ENCODE measurements at regions of chr2 and their contacts with region 1.

Region 1: GRCh38 chr2:169824373-169825333 is at the start of gene METTL5:
- DNase-seq: peak; percentile 72 to 79 (median 73)
- H3K4me3 ChIP-seq: peak within 1 kb of the TSS; percentile 78
- H3K4me3 Mint-ChIP-seq: peak within 1 kb of the TSS; percentile 88 to 98 (median 95)
- H3K27ac ChIP-seq: peak within 1 kb of the TSS; percentile 79
- H3K27ac Mint-ChIP-seq: peak within 1 kb of the TSS; percentile 71 to 95 (median 90)
- H3K4me1 ChIP-seq: peaks cover 39% of the 10 kb centered on the region
- H3K4me1 Mint-ChIP-seq: peaks cover 49 to 80% (median 74%) of the 10 kb centered on the region in 3 donors
- H3K27me3 ChIP-seq: no peaks in the 10 kb centered on the region
- H3K27me3 Mint-ChIP-seq: no peaks in the 10 kb centered on the region
- total RNA-seq, gene METTL5: 93.0 to 100 TPM

Region 2: GRCh38 chr2:169637620-169638019 is 187.0 kb before region 1 on chr2:
- CTCF ChIA-PET with region 1: no interaction called
- POLR2A ChIA-PET with region 1: no interaction called
- DNase-seq: no peak
- H3K4me3 ChIP-seq: no peak overlapping the region
- H3K4me3 Mint-ChIP-seq: no peak overlapping the region
- H3K27ac ChIP-seq: no peak overlapping the region
- H3K27ac Mint-ChIP-seq: no peak overlapping the region
- H3K4me1 ChIP-seq: no peaks in the 10 kb centered on the region
- H3K4me1 Mint-ChIP-seq: no peaks in the 10 kb centered on the region
- H3K27me3 ChIP-seq: no peaks in the 10 kb centered on the region
- H3K27me3 Mint-ChIP-seq: no peaks in the 10 kb centered on the region

Region 3: DNA sequence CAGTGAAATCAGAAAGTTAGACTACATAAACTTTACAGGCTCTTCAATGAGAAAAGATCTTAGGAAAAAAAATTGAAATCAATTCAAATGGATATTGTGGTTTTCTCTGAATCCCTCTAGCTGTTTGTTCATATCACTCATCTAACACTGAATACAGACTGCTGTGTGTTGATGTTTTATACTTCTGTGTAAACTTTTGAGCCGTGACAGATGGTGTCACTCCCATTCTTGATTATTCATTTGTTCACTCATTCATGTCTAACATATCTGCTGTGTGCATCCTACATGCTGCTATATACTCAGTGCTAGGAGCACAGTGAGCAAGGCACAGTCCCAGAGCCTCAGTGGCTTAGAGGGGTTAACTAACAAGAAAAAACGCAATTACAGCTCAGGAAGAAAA is 78.4 kb before region 1 on chr2:
- CTCF ChIA-PET with region 1: no interaction called
- POLR2A ChIA-PET with region 1: no interaction called
- DNase-seq: no peak
- H3K4me3 ChIP-seq: no peak overlapping the region
- H3K4me3 Mint-ChIP-seq: no peak overlapping the region
- H3K27ac ChIP-seq: no peak overlapping the region
- H3K27ac Mint-ChIP-seq: no peak overlapping the region
- H3K4me1 ChIP-seq: no peaks in the 10 kb centered on the region
- H3K4me1 Mint-ChIP-seq: no peaks in the 10 kb centered on the region
- H3K27me3 ChIP-seq: no peaks in the 10 kb centered on the region
- H3K27me3 Mint-ChIP-seq: no peaks in the 10 kb centered on the region

Region 4: DNA sequence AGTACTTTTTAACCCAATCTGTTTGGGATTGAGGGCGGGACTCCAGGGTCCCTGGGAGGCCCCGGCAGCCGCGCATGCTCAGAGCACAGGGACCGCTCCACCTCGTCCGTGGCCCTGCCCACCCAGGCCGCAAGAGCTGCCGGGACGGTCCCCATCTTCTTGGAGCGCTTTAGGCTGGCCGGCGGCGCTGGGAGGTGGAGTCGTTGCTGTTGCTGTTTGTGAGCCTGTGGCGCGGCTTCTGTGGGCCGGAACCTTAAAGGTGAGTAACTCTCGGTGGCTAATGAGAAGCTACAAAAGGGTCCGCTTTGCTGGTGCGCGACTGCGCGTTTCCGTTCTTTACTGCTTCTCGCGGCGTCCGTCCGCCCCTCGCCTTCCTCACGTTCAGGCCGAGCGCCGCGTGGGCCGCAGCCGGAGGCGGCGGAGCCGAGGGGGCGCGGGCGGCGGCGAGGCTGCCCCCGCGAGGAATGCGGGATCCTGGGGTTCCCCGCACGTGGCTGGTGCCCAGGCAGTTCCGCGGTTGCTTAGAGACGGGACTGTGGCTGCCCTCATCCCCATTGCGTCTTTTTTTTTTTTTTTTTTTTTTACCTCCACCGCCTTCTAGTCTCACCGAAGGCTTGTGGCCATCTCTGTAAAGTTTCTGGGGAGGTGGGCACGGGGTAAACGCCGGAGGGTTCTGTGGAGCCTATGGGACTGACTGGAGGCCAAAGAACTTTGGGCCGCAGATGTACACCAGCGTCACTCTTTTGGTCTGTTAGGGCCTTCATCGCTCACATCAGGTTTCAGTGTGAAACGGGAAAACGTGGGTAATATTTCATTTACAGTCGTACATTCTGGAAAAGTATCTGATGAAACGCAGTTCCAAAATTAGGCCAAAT is 25.7 kb before region 1 on chr2 and contains the start of gene SSB:
- CTCF ChIA-PET with region 1: interaction called, 14 read pairs
- POLR2A ChIA-PET with region 1: interaction called, 15 read pairs
- DNase-seq: peak; percentile 86 to 96 (median 89)
- H3K4me3 ChIP-seq: peak within 1 kb of the TSS; percentile 81
- H3K4me3 Mint-ChIP-seq: peak within 1 kb of the TSS; percentile 84 to 98 (median 91)
- H3K27ac ChIP-seq: peak within 1 kb of the TSS; percentile 96
- H3K27ac Mint-ChIP-seq: peak within 1 kb of the TSS; percentile 89 to 99 (median 98)
- H3K4me1 ChIP-seq: peaks cover 27% of the 10 kb centered on the region
- H3K4me1 Mint-ChIP-seq: peaks cover 34 to 52% (median 46%) of the 10 kb centered on the region in 3 donors
- H3K27me3 ChIP-seq: no peaks in the 10 kb centered on the region
- H3K27me3 Mint-ChIP-seq: no peaks in the 10 kb centered on the region
- total RNA-seq, gene SSB: 101 to 113 TPM

Region 5: GRCh38 chr2:169839954-169840746 is 15.5 kb after region 1 on chr2:
- CTCF ChIA-PET with region 1: no interaction called
- POLR2A ChIA-PET with region 1: no interaction called
- DNase-seq: no peak
- H3K4me3 ChIP-seq: no peak overlapping the region
- H3K4me3 Mint-ChIP-seq: no peak overlapping the region
- H3K27ac ChIP-seq: peak overlapping the region; percentile 64
- H3K27ac Mint-ChIP-seq: peak overlapping the region in 4 of 8 donors; percentile 16 to 77 (median 21)
- H3K4me1 ChIP-seq: peaks cover 3% of the 10 kb centered on the region
- H3K4me1 Mint-ChIP-seq: peaks cover 42 to 82% (median 59%) of the 10 kb centered on the region in 3 donors
- H3K27me3 ChIP-seq: no peaks in the 10 kb centered on the region
- H3K27me3 Mint-ChIP-seq: no peaks in the 10 kb centered on the region

Region 6: DNA sequence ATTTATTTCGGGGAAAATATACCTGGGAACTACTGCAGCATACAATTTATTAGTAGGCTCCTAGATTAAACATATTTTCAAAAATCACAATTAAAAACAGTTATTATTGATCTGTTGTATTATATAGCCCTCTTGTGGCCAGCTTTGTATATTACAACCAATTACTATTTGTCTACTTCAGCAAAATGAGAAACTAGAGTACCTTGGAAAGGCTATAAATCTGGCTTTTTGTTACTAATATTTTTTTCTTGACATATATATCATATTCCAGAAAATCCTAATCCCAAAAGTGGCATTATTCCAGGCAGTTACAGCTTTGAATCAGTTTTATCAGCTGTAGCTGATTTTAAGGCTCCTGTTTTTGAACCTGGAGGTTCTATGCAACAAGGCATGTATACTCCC is 103.8 kb after region 1 on chr2:
- CTCF ChIA-PET with region 1: interaction called, 10 read pairs
- POLR2A ChIA-PET with region 1: no interaction called
- DNase-seq: peak in 2 of 5 donors; percentile 13 to 31
- H3K4me3 ChIP-seq: no peak overlapping the region
- H3K4me3 Mint-ChIP-seq: no peak overlapping the region
- H3K27ac ChIP-seq: no peak overlapping the region
- H3K27ac Mint-ChIP-seq: no peak overlapping the region
- H3K4me1 ChIP-seq: no peaks in the 10 kb centered on the region
- H3K4me1 Mint-ChIP-seq: no peaks in the 10 kb centered on the region
- H3K27me3 ChIP-seq: no peaks in the 10 kb centered on the region
- H3K27me3 Mint-ChIP-seq: no peaks in the 10 kb centered on the region

Region 7: GRCh38 chr2:169955940-169956339 is 131.3 kb after region 1 on chr2:
- CTCF ChIA-PET with region 1: no interaction called
- POLR2A ChIA-PET with region 1: no interaction called
- DNase-seq: no peak
- H3K4me3 ChIP-seq: no peak overlapping the region
- H3K4me3 Mint-ChIP-seq: no peak overlapping the region
- H3K27ac ChIP-seq: no peak overlapping the region
- H3K27ac Mint-ChIP-seq: no peak overlapping the region
- H3K4me1 ChIP-seq: no peaks in the 10 kb centered on the region
- H3K4me1 Mint-ChIP-seq: no peaks in the 10 kb centered on the region
- H3K27me3 ChIP-seq: no peaks in the 10 kb centered on the region
- H3K27me3 Mint-ChIP-seq: no peaks in the 10 kb centered on the region

Measured in CD8-positive, alpha-beta memory T cell (primary cell).